ENCODE measurements at regions of chr6 and their contacts with region 1.

Region 1: GRCh38 chr6:45922728-45923351 is 92.8 kb downstream of the CLIC5 start:
- DNase-seq: peak; percentile 39 to 71 (median 60)
- H3K4me3 ChIP-seq: no peak overlapping the region
- H3K27ac ChIP-seq: no peak overlapping the region
- H3K4me1 ChIP-seq: no peaks in the 10 kb centered on the region
- H3K27me3 ChIP-seq: no peaks in the 10 kb centered on the region
- CTCF ChIP-seq: peak; percentile 25 to 42 (median 41)
- EP300 ChIP-seq: no peak
- POLR2A ChIP-seq: no peak

Region 2: DNA sequence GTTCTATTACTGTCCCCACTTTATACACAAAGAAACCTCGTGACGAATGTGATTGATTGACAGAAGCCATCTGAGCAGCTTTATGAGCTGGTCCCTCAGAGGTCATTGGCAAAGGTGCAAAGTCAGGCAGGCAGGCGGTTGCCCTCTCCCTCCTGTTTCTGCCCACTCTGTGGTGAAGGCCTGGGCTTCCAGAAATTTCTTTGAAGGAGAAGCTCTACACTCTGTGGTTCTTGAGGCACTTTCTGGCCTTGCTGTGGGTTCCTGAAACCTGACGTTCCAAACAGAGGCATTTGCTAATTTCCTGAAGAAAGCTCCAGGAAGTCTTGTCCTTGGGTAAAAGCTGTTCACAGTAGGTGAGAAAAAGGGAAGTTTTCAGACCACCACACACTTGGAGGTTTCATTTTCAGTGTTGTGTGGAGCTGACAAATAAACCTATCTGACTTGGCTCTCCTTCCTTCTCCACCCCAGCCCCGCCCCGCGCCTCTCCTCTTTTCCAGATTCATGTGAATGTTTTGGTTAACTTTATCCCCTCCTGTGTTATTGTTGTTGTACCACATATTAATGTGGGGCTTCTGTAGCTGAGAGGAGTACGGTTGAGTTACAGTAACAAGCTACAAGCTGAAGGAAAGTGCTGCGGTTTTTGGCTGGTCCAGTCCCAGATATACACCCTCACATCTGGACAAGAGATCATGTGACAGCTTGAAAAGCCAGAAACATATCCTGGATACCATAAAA is 181.2 kb before region 1 on chr6:
- intact Hi-C with region 1: loop called in 1 of 4 experiments (anchors 10 kb)
- DNase-seq: peak in 2 of 5 donors; percentile 20 to 40
- H3K4me3 ChIP-seq: no peak overlapping the region
- H3K27ac ChIP-seq: no peak overlapping the region
- H3K4me1 ChIP-seq: peaks cover 5% of the 10 kb centered on the region
- H3K27me3 ChIP-seq: no peaks in the 10 kb centered on the region
- CTCF ChIP-seq: no peak
- EP300 ChIP-seq: no peak
- POLR2A ChIP-seq: no peak

Region 3: GRCh38 chr6:46612645-46613044 is 689.8 kb after region 1 on chr6:
- intact Hi-C with region 1: loop called in 1 of 4 experiments (anchors 10 kb)
- DNase-seq: no peak
- H3K4me3 ChIP-seq: no peak overlapping the region
- H3K27ac ChIP-seq: no peak overlapping the region
- H3K4me1 ChIP-seq: no peaks in the 10 kb centered on the region
- H3K27me3 ChIP-seq: no peaks in the 10 kb centered on the region
- CTCF ChIP-seq: no peak
- EP300 ChIP-seq: no peak
- POLR2A ChIP-seq: no peak

Measured in ovary (tissue), 10 donors.